ENCODE measurements at regions of chr6 and their contacts with region 1.

Region 1: DNA sequence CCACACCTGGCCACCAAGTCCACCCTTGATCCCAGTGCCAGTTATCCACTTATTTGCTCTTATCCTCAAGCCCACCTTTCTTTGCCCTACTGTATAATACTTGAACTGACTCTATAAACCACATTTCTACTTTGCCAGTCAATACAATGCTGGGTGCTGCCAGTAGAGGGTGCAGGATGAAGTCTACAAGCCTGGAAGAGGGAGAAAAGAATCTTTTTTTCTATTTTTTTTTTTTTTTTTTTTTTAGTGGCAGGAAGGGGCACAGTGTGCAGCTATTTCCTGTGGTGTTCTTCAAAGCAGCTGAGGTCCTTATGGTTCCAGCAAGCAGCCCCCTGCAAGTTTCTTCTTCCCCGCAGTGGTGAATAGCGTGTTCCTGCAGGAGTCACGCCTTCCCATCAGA is 22.2 kb upstream of the GABRR1 start:
- DNase-seq: no peak
- H3K4me3 ChIP-seq: no peak overlapping the region
- H3K27ac ChIP-seq: no peak overlapping the region
- H3K4me1 ChIP-seq: no peaks in the 10 kb centered on the region
- H3K27me3 ChIP-seq: no peaks in the 10 kb centered on the region
- CTCF ChIP-seq: no peak
- POLR2A ChIP-seq: no peak

Region 2: DNA sequence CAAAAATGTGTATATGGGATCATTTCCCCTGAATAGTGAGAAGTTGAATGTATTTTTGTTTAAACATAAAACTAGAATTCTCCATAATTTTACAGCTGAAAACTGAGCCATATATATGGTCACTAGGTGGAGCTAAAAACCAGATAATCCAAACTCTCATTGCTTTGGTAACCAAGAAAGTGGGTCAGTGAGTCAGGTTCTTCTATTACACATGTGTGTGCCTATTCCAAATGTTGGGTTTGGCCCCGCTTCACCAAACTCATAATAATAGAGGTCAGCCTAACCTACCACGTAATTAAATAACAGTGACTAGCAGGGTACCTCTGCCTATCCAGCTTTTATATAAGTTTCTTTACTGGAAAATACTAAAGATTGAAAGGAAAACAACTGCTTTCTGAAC is 256.6 kb before region 1 on chr6:
- intact Hi-C with region 1: loop called (anchors 5 kb)
- DNase-seq: peak; percentile 57 to 78
- H3K4me3 ChIP-seq: no peak overlapping the region
- H3K27ac ChIP-seq: no peak overlapping the region
- H3K4me1 ChIP-seq: no peaks in the 10 kb centered on the region
- H3K27me3 ChIP-seq: no peaks in the 10 kb centered on the region
- CTCF ChIP-seq: peak; percentile 66 to 84 (median 80)
- POLR2A ChIP-seq: no peak

Region 3: GRCh38 chr6:89352278-89353117 is 113.2 kb after region 1 on chr6 and contains the start of gene UBE2J1:
- intact Hi-C with region 1: no loop called
- DNase-seq: peak; percentile 92
- H3K4me3 ChIP-seq: peak within 1 kb of the TSS; percentile 48 to 77
- H3K27ac ChIP-seq: peak within 1 kb of the TSS; percentile 95 to 99
- H3K4me1 ChIP-seq: peaks cover 0 to 5% of the 10 kb centered on the region in 2 donors
- H3K27me3 ChIP-seq: no peaks in the 10 kb centered on the region
- CTCF ChIP-seq: no peak
- POLR2A ChIP-seq: peak; percentile 76 to 96
- total RNA-seq, gene UBE2J1: 13.1 to 55.2 (median 41.0) TPM

Measured in uterus (tissue), 4 donors.